Activated T-helper 2 cell treated with anti-CD3 and anti-CD28 coated beads, Interferon-gamma antibody, Interleukin-2, Interleukin-4, amounts not matched to agents 10 μg/mL and 5 μg/mL and 100 μg/mL, durations not matched to agents 14 hours and 24 hours and 36 hours (primary cell): ENCODE measurements at regions of chr1 and their contacts with region 1.

Region 1: DNA sequence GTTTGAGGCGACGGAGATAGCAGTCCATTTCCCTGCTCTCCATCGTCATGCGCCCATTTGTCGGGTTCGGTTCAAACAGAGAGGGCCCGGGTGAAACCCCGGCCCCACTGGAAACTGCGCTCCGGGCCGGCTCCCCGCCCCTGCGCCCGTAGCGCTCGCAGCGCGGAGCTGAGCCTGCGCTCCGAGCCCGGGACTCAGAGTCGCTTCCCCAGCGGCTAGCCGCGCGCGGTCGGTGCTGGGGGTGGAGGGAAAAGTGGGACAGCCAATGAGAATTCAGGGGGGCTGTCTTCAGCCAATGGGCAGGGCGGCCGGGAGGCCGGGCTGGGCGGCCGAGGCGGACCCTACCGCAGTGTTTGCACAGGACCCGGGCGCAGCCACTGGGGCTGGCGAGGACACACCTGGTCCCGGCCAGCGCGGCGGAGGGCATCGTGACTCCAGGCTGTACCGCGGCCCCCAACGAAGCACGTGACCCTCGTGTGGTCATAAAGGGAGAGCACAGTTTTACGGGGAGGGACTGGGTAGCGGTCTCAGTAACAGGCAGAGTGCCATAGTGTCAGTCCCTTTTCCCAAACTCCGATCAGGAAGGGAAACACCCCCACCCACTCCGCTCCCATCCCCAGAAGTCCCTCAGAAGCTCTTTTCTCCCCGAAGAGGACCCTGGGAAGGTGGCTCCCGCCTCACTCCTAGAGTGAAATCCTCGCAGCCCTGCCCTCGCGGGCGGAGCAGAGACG is at the start of gene INKA2:
- DNase-seq: peak; percentile 80
- H3K4me3 Mint-ChIP-seq: peak within 1 kb of the TSS; percentile 93
- H3K27ac Mint-ChIP-seq: peak within 1 kb of the TSS; percentile 88
- H3K4me1 Mint-ChIP-seq: peaks cover 16% of the 10 kb centered on the region
- H3K27me3 Mint-ChIP-seq: peaks cover 38% of the 10 kb centered on the region
- total RNA-seq, gene INKA2: 0.43 and 2.2 TPM in 2 replicates

Region 2: GRCh38 chr1:111720977-111721786 is 18.2 kb before region 1 on chr1:
- intact Hi-C with region 1: loop called (anchors 2 kb)
- DNase-seq: no peak
- H3K4me3 Mint-ChIP-seq: no peak overlapping the region
- H3K27ac Mint-ChIP-seq: no peak overlapping the region
- H3K4me1 Mint-ChIP-seq: peaks cover 7% of the 10 kb centered on the region
- H3K27me3 Mint-ChIP-seq: no peaks in the 10 kb centered on the region